A673 (cell line): ENCODE measurements at regions of chr7 and their contacts with region 1.

Region 1: DNA sequence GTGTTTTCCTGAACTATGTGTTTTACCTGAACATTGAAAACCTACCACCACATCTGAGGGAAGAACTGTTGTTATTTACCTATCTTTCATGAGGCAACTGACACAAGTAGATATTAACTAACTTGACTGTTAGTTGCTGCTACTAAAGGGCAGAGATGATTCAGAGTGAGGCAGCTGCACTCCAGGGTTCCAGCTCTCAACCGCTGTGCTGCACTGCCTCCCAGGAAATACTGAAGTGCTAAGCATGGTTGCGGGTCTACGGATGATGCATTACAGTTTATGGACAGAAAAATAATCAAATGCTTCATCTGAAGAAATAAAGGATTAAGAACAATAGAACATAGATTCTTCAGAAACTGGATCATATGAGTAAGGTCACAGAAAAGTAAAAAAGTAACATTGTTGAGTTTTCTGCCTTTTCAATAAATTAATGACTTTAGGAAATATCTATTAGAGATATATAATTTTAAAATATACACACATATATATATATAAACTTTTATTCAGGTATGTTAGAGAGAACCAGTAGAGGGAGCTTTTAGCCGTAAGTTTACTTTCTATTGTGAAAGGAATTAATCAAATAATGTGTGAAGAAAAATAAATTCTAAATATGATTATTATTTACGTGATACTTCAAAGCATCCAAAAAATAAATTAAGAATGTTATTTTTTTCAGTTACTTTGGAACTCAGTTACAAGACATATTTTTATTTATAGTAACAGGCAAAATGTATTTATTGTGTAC is 620.0 kb downstream of the CNTNAP2 start:
- DNase-seq: peak; percentile 37
- H3K4me3 ChIP-seq: no peak overlapping the region
- H3K27ac ChIP-seq: no peak overlapping the region
- H3K4me1 ChIP-seq: no peaks in the 10 kb centered on the region
- H3K27me3 ChIP-seq: no peaks in the 10 kb centered on the region
- CTCF ChIP-seq: peak; percentile 2; the same call in 1 of the 2 replicates

Region 2: GRCh38 chr7:146433501-146433900 is 303.1 kb before region 1 on chr7:
- CTCF ChIA-PET with region 1: no interaction called
- POLR2A ChIA-PET with region 1: no interaction called
- intact Hi-C with region 1: no loop called
- DNase-seq: no peak
- H3K4me3 ChIP-seq: no peak overlapping the region
- H3K27ac ChIP-seq: no peak overlapping the region
- H3K4me1 ChIP-seq: no peaks in the 10 kb centered on the region
- H3K27me3 ChIP-seq: no peaks in the 10 kb centered on the region
- CTCF ChIP-seq: no peak

Region 3: GRCh38 chr7:147245292-147245691 is 508.7 kb after region 1 on chr7:
- CTCF ChIA-PET with region 1: no interaction called
- POLR2A ChIA-PET with region 1: no interaction called
- intact Hi-C with region 1: loop called (anchors 10 kb)
- DNase-seq: peak; percentile 63
- H3K4me3 ChIP-seq: no peak overlapping the region
- H3K27ac ChIP-seq: no peak overlapping the region
- H3K4me1 ChIP-seq: no peaks in the 10 kb centered on the region
- H3K27me3 ChIP-seq: no peaks in the 10 kb centered on the region
- CTCF ChIP-seq: peak; percentile 77